ENCODE measurements at regions of chr4 and their contacts with region 1.

Region 1: GRCh38 chr4:168335621-168336020 is 17.1 kb upstream of the DDX60 start:
- DNase-seq: no peak
- ATAC-seq: no peak
- H3K4me3 ChIP-seq: no peak overlapping the region
- H3K4me3 Mint-ChIP-seq: no peak overlapping the region
- H3K27ac ChIP-seq: no peak overlapping the region
- H3K27ac Mint-ChIP-seq: no peak overlapping the region
- H3K4me1 ChIP-seq: no peaks in the 10 kb centered on the region
- H3K4me1 Mint-ChIP-seq: no peaks in the 10 kb centered on the region
- H3K27me3 ChIP-seq: no peaks in the 10 kb centered on the region
- H3K27me3 Mint-ChIP-seq: no peaks in the 10 kb centered on the region
- CTCF ChIP-seq: no peak

Region 2: GRCh38 chr4:168139336-168139735 is 196.3 kb before region 1 on chr4:
- CTCF ChIA-PET with region 1: no interaction called
- POLR2A ChIA-PET with region 1: no interaction called
- intact Hi-C with region 1: loop called in 1 of 2 experiments (anchors 5 kb)
- DNase-seq: no peak
- ATAC-seq: no peak
- H3K4me3 ChIP-seq: no peak overlapping the region
- H3K4me3 Mint-ChIP-seq: no peak overlapping the region
- H3K27ac ChIP-seq: no peak overlapping the region
- H3K27ac Mint-ChIP-seq: no peak overlapping the region
- H3K4me1 ChIP-seq: no peaks in the 10 kb centered on the region
- H3K4me1 Mint-ChIP-seq: no peaks in the 10 kb centered on the region
- H3K27me3 ChIP-seq: peaks cover 0 to 3% of the 10 kb centered on the region in 2 experiments
- H3K27me3 Mint-ChIP-seq: peaks cover 9% of the 10 kb centered on the region
- CTCF ChIP-seq: no peak

Region 3: DNA sequence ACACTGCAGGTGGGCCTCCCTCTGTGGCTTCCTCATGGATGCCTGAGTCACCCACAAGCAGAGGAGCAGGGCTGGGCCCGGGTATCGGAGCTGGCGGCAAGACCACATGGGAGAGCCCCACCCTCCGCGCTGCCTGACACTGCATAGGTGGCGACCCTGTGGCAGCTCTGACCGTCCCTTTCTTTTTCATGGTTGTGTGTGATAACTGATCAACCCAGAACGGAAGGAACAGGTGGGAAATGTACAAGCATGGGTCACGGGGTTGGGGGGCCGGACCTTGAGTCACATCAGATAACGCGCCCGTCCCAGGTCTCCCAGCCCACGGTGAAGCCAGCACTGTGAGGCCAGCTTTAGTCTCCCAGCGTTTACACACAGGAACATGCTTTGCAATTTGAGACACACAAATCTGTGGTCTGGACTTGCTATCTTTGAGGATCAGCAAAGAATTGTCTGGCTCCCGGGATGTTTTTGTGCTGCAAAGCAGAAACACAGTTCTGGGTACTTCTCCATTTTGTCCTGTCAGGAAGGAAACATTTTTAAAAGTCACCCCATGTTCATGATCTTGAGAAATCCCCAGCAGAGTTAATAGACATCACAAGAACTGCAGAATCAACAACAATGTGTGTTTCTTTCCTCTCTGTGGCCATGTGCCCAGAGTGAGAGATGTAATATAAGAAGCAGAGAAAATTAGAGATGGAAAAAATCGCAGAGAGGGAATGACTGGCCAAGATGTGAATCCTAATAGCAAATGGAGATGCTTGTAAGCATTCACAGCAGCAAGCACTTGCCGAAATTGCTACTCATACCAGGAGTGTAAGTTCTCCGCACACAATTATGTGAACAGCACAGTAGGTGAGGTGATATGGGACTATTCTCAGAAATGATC is 744.6 kb after region 1 on chr4:
- CTCF ChIA-PET with region 1: no interaction called
- POLR2A ChIA-PET with region 1: no interaction called
- intact Hi-C with region 1: no loop called
- DNase-seq: peak in 3 of 9 experiments; percentile 13 to 14 (median 13)
- ATAC-seq: peak; percentile 40
- H3K4me3 ChIP-seq: peak overlapping the region; percentile 32 to 37
- H3K4me3 Mint-ChIP-seq: peak overlapping the region; percentile 62
- H3K27ac ChIP-seq: no peak overlapping the region
- H3K27ac Mint-ChIP-seq: no peak overlapping the region
- H3K4me1 ChIP-seq: peaks cover 10% of the 10 kb centered on the region
- H3K4me1 Mint-ChIP-seq: peaks cover 15% of the 10 kb centered on the region
- H3K27me3 ChIP-seq: no peaks in the 10 kb centered on the region
- H3K27me3 Mint-ChIP-seq: peaks cover 13% of the 10 kb centered on the region
- CTCF ChIP-seq: no peak